ENCODE measurements at regions of chr16 and their contacts with region 1.

Region 1: GRCh38 chr16:69535123-69536050 is 30.4 kb upstream of the NFAT5 start:
- DNase-seq: no peak
- H3K4me3 Mint-ChIP-seq: no peak overlapping the region
- H3K27ac Mint-ChIP-seq: no peak overlapping the region
- H3K4me1 Mint-ChIP-seq: peaks cover 28% of the 10 kb centered on the region
- H3K27me3 Mint-ChIP-seq: no peaks in the 10 kb centered on the region
- CTCF ChIP-seq: no peak

Region 2: DNA sequence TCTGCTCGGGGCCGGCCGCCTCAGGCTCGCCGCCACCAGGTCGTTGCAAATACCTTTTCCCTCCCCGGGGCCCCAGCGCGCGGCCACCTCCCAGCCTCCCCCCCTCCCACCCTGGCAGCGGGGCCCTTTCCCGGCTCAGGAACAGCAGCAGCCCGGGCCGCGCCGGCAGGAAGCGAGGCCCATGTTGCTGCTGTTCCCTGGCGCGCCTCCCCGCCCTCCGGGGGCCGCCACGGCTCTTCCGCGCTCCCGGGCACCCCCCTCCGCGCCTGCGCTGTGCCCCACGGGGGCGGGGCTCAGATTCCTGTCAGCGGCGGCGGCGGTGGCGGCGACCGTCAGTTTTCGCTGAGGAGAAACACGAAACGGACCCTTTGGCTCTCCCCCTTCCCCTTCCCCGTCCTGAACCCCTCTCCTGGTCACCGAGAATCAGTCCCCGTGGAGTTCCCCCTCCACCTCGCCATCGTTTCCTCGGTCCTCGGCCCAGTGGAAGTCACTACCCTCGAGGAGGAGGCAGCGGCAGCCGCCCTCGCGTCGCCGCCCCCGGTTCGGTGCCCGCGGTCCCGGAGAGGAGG is 30.4 kb after region 1 on chr16 and contains the start of gene NFAT5:
- CTCF ChIA-PET with region 1: no interaction called
- intact Hi-C with region 1: loop called (anchors 1 kb)
- DNase-seq: peak; percentile 96
- H3K4me3 Mint-ChIP-seq: peak within 1 kb of the TSS; percentile 82
- H3K27ac Mint-ChIP-seq: peak within 1 kb of the TSS; percentile 90
- H3K4me1 Mint-ChIP-seq: peaks cover 15% of the 10 kb centered on the region
- H3K27me3 Mint-ChIP-seq: no peaks in the 10 kb centered on the region
- CTCF ChIP-seq: no peak
- total RNA-seq, gene NFAT5: 57.9 and 64.3 TPM in 2 replicates